ENCODE measurements at regions of chr19 and their contacts with region 1.

Region 1: GRCh38 chr19:15418588-15419412 is at the start of gene AKAP8L:
- DNase-seq: peak; percentile 94 to 100 (median 98)
- ATAC-seq: peak; percentile 92
- H3K4me3 ChIP-seq: peak within 1 kb of the TSS; percentile 94
- H3K4me3 Mint-ChIP-seq: peak within 1 kb of the TSS; percentile 94
- H3K27ac ChIP-seq: peak within 1 kb of the TSS; percentile 53 to 83
- H3K27ac Mint-ChIP-seq: peak within 1 kb of the TSS; percentile 92
- H3K4me1 ChIP-seq: peaks cover 40% of the 10 kb centered on the region
- H3K4me1 Mint-ChIP-seq: peaks cover 46% of the 10 kb centered on the region
- H3K27me3 ChIP-seq: no peaks in the 10 kb centered on the region
- H3K27me3 Mint-ChIP-seq: no peaks in the 10 kb centered on the region
- CTCF ChIP-seq: peak; percentile 85
- total RNA-seq, gene AKAP8L: 157 to 162 TPM

Region 2: DNA sequence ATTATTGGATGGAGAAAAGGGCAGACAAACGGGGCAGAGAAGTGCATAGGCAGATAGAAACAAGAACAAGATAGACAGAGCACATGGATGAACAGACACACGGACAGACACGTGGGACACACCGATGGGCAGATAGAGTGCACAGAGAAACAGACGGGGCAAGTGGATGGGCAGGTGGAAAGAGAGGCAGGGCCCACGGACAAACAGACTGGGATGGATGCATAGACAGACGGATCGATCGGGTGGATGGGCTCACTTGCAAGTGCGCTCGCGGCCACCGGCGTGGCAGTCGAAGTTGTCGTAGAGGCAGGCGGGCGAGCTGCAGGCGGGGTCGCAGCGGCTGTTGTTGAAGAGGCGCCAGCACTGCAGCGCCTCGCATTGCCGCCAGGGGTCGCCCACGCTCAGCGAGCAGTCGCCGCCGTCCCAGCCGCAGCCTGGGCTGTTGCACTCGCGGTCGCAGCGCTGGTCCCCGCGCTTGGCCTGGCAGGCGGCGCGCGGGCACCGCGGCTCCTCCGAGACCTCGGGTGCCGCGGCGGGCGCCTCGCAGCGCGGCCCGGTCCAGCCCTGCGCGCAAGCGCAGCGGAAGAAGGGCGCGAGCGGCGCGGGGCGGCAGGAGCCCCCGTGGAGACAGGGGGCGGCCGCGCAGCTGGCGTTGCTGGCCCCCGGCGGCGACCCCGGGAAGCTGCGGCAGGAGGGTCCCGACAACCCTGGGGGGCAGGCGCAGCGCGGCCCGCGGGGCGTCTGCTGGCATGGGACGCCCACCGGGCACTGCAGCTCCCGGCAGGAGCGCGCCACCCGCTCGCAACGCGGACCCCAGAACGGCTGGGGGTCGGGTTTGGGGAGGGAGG is 241.3 kb before region 1 on chr19:
- CTCF ChIA-PET with region 1: no interaction called
- POLR2A ChIA-PET with region 1: interaction called, 3 read pairs
- intact Hi-C with region 1: loop called in 1 of 2 experiments (anchors 2 kb)
- DNase-seq: peak; percentile 66 to 92 (median 80)
- ATAC-seq: peak; percentile 100
- H3K4me3 ChIP-seq: no peak overlapping the region
- H3K4me3 Mint-ChIP-seq: no peak overlapping the region
- H3K27ac ChIP-seq: no peak overlapping the region
- H3K27ac Mint-ChIP-seq: no peak overlapping the region
- H3K4me1 ChIP-seq: peaks cover 7% of the 10 kb centered on the region
- H3K4me1 Mint-ChIP-seq: peaks cover 5% of the 10 kb centered on the region
- H3K27me3 ChIP-seq: peaks cover 0 to 6% of the 10 kb centered on the region in 2 experiments
- H3K27me3 Mint-ChIP-seq: peaks cover 21% of the 10 kb centered on the region
- CTCF ChIP-seq: peak; percentile 79

Region 3: DNA sequence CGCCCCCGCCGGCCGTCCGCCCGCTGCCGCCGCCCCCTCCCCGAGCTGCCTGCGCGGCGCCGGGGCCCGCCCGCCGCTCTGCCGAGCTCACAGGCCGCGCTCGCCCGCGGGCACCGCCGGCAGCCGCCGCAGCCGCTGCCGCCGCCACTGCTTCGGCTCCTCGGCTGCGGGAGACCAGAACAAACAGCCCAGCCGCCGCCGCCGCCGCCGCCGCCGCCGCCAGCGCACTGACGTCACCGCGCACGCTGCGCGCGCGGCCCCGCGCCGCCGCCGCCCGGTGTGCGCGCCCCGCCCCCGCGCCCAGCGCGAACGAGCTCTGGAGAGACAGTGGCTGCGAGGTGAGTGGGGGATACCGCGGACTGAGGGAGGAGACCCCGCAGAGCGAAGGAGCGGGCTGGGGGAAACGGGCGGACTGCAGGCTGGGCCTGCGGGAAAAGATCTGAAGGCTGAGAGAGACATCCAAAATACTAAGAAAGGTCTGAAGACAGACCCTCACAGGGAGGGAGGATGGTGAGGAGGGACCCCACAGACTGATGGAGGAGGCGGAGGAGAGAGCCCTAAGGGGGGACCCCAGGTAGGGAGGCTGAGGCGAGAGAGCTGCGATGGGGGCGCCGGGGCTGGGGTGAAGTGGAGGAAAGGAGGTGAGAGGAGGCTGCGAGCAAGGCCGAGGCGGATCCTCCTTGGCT is 86.3 kb before region 1 on chr19 and contains the start of gene BRD4:
- CTCF ChIA-PET with region 1: interaction called, 5 read pairs
- POLR2A ChIA-PET with region 1: interaction called, 29 read pairs
- intact Hi-C with region 1: loop called in 1 of 2 experiments (anchors 5 kb)
- DNase-seq: peak; percentile 59 to 92 (median 72)
- ATAC-seq: peak; percentile 63
- H3K4me3 ChIP-seq: peak within 1 kb of the TSS; percentile 90
- H3K4me3 Mint-ChIP-seq: peak within 1 kb of the TSS; percentile 96
- H3K27ac ChIP-seq: peak within 1 kb of the TSS; percentile 51 to 67
- H3K27ac Mint-ChIP-seq: peak within 1 kb of the TSS; percentile 88
- H3K4me1 ChIP-seq: peaks cover 45% of the 10 kb centered on the region
- H3K4me1 Mint-ChIP-seq: peaks cover 47% of the 10 kb centered on the region
- H3K27me3 ChIP-seq: no peaks in the 10 kb centered on the region
- H3K27me3 Mint-ChIP-seq: no peaks in the 10 kb centered on the region
- CTCF ChIP-seq: no peak
- total RNA-seq, gene BRD4: 101 to 102 TPM

Region 4: GRCh38 chr19:15404097-15404779 is 14.6 kb before region 1 on chr19:
- CTCF ChIA-PET with region 1: interaction called, 5 read pairs
- POLR2A ChIA-PET with region 1: interaction called, 11 read pairs
- intact Hi-C with region 1: no loop called
- DNase-seq: peak in 1 of 14 experiments; percentile 2
- ATAC-seq: no peak
- H3K4me3 ChIP-seq: no peak overlapping the region
- H3K4me3 Mint-ChIP-seq: no peak overlapping the region
- H3K27ac ChIP-seq: no peak overlapping the region
- H3K27ac Mint-ChIP-seq: no peak overlapping the region
- H3K4me1 ChIP-seq: peaks cover 6% of the 10 kb centered on the region
- H3K4me1 Mint-ChIP-seq: peaks cover 40% of the 10 kb centered on the region
- H3K27me3 ChIP-seq: no peaks in the 10 kb centered on the region
- H3K27me3 Mint-ChIP-seq: no peaks in the 10 kb centered on the region
- CTCF ChIP-seq: no peak

Region 5: GRCh38 chr19:15449620-15450527 is 31.1 kb after region 1 on chr19 and contains the start of gene WIZ:
- CTCF ChIA-PET with region 1: interaction called, 12 read pairs
- POLR2A ChIA-PET with region 1: interaction called, 10 read pairs
- intact Hi-C with region 1: loop called in 1 of 2 experiments (anchors 5 kb)
- DNase-seq: peak; percentile 75 to 92 (median 84)
- ATAC-seq: peak; percentile 83
- H3K4me3 ChIP-seq: peak within 1 kb of the TSS; percentile 47
- H3K4me3 Mint-ChIP-seq: peak within 1 kb of the TSS; percentile 92
- H3K27ac ChIP-seq: peak within 1 kb of the TSS in 1 of 2 donors; percentile 79
- H3K27ac Mint-ChIP-seq: peak within 1 kb of the TSS; percentile 81
- H3K4me1 ChIP-seq: peaks cover 30% of the 10 kb centered on the region
- H3K4me1 Mint-ChIP-seq: peaks cover 30% of the 10 kb centered on the region
- H3K27me3 ChIP-seq: no peaks in the 10 kb centered on the region
- H3K27me3 Mint-ChIP-seq: no peaks in the 10 kb centered on the region
- CTCF ChIP-seq: no peak
- total RNA-seq, gene WIZ: 12.9 to 14.3 TPM

Region 6: GRCh38 chr19:15508035-15508710 is 89.4 kb after region 1 on chr19 and contains the start of gene CYP4F22:
- CTCF ChIA-PET with region 1: interaction called, 3 read pairs
- POLR2A ChIA-PET with region 1: interaction called, 15 read pairs
- intact Hi-C with region 1: no loop called
- DNase-seq: peak in 4 of 14 experiments; percentile 23 to 37 (median 28)
- ATAC-seq: peak; percentile 26
- H3K4me3 ChIP-seq: peak within 1 kb of the TSS; percentile 39
- H3K4me3 Mint-ChIP-seq: peak within 1 kb of the TSS; percentile 76
- H3K27ac ChIP-seq: no peak within 1 kb of the TSS
- H3K27ac Mint-ChIP-seq: no peak within 1 kb of the TSS
- H3K4me1 ChIP-seq: peaks cover 23% of the 10 kb centered on the region
- H3K4me1 Mint-ChIP-seq: peaks cover 22% of the 10 kb centered on the region
- H3K27me3 ChIP-seq: peaks cover 7 to 8% of the 10 kb centered on the region in 2 experiments
- H3K27me3 Mint-ChIP-seq: peaks cover 18% of the 10 kb centered on the region
- CTCF ChIP-seq: no peak
- total RNA-seq, gene CYP4F22: 0.19 to 0.28 TPM